Left lung (tissue), 14 donors: ENCODE measurements at regions of chr1 and their contacts with region 1.

Region 1: GRCh38 chr1:245156081-245156735 is 1.4 kb downstream of the KIF26B start:
- DNase-seq: peak; percentile 68 to 95 (median 87)
- ATAC-seq: peak; percentile 94
- H3K4me3 ChIP-seq: peak overlapping the region; percentile 39 to 48
- H3K27ac ChIP-seq: no peak overlapping the region
- H3K4me1 ChIP-seq: peaks cover 4 to 47% of the 10 kb centered on the region in 2 donors
- H3K27me3 ChIP-seq: peaks cover 0 to 72% of the 10 kb centered on the region in 2 donors
- CTCF ChIP-seq: peak; percentile 81

Region 2: DNA sequence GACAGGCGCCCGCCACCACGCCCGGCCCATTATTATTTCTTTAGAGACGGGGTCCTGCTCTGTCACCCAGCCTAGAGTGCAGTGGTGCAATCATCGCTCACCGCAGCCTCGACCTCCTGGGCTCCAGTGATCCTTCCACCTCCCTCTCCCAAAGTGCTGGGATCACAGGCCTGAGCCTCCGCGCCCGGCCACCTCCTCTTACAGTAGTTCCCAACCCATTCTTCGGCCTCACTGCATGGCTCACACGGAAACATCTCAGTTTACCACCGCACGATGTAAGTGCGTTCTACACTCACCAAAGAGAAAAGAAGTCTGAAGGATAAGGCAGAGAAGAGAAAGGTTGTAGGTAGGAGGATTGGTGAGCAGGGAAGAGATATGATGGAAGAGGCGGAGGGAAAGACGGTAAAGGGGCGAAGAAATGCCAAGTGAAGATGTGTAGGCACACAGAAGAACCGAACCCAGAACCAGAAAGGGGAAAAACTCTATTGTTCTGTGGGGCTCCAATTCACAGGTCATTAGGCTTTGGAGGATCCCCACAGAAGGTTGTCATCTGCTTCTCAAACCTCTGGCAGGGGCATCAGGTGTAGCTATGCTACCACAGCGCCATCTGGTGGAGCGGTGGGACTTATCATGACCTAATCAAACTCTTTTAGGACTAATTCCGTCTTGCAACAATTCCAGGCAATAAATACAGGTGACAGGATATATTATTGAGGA is 846.7 kb after region 1 on chr1:
- intact Hi-C with region 1: loop called in 1 of 2 experiments (anchors 10 kb)
- DNase-seq: peak; percentile 77 to 90 (median 84)
- ATAC-seq: peak; percentile 90
- H3K4me3 ChIP-seq: no peak overlapping the region
- H3K27ac ChIP-seq: no peak overlapping the region
- H3K4me1 ChIP-seq: peaks cover 0 to 3% of the 10 kb centered on the region in 2 donors
- H3K27me3 ChIP-seq: no peaks in the 10 kb centered on the region
- CTCF ChIP-seq: peak; percentile 65 to 84

Region 3: GRCh38 chr1:246117066-246117791 is 961.0 kb after region 1 on chr1:
- intact Hi-C with region 1: loop called in 1 of 2 experiments (anchors 5 kb)
- DNase-seq: peak in 2 of 4 donors; percentile 34 to 74
- ATAC-seq: peak; percentile 96
- H3K4me3 ChIP-seq: no peak overlapping the region
- H3K27ac ChIP-seq: no peak overlapping the region
- H3K4me1 ChIP-seq: peaks cover 0 to 8% of the 10 kb centered on the region in 2 donors
- H3K27me3 ChIP-seq: no peaks in the 10 kb centered on the region
- CTCF ChIP-seq: peak; percentile 34 to 37